Posterior cingulate gyrus (tissue), 11 donors: ENCODE measurements at regions of chr7 and their contacts with region 1.

Region 1: GRCh38 chr7:127107601-127108007 is 145.1 kb downstream of the GRM8 start:
- DNase-seq: peak in 2 of 10 donors; percentile 43 to 53

Region 2: DNA sequence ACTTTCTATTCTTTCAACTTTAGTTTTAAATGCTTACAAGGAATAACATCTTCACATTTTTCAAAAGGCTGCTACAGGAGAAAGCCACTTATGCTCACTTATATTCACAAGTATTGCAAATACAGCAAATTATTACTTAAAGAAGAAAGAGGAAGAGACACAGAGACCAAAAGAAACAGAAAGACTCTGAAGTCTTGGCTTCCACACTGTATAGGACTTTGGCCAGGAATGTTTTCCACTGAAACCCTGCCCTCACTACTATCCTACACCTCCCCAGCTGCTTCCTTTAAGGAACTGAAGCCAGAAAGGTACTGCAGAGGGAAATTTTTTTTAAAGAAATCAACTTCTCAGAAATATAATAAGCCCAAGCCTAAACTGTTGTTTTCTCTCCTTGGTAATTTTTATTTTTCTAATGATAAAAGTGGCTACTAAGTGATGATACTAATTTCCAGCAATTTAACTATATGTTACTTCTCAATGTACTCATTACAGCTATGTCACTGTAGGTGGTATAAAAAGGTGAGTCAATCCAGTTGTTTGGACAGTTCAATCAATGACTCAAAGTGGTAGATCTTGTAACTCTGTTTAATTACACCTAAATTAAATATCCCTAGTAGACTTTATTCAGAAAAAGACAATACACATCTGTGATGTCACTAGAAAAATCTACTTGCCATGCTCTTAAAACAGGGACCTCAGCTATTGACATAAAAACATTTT is 86.4 kb before region 1 on chr7:
- intact Hi-C with region 1: no loop called
- DNase-seq: no peak

Region 3: DNA sequence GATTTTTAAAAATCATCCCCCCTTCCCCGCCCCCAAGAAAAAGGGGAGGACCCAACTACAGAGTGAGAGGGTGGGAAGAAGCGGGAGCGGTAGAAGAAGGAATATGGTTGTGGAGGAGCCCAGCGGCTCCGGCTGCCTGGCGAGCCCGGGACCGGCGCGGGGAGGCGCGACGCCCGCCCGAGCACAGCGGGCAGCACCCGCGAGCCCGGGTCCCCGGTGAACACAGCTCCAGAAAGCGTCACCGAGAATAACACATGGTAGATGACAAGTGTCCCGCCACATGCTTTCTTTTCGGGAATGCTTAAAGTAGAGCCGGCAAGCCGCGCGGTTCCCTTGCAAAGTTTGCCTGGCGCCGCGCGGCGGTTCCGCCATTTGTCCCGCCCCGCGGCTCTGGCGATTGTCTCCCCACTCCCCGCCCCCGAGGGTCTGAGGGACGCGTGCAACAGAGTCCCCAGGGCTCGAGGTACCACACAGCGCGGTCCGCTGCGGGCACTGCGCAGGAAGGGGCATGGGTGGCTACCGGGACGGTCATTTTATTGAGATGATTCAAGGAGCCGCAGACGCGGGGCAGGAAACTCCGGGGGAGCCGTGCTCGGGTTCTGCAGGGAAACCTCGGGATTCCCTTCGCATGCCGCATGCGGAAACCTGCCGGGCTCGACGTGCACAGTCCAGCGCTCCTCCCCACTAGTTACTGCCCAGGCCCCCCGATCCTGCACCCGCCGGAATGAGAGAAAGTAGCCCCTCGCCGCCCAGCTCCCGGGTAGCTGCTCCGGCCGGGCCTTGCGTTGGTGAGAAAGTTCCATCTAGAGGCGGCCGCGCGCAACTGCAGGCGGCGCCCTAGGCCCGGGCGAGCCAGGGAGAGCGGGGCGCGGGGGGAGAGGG is 145.9 kb after region 1 on chr7:
- intact Hi-C with region 1: loop called (anchors 5 kb)
- DNase-seq: peak; percentile 60 to 96 (median 74)

Region 4: GRCh38 chr7:127651556-127652332 is 544.1 kb after region 1 on chr7 and contains the start of gene SND1:
- intact Hi-C with region 1: no loop called
- DNase-seq: peak; percentile 98 to 100 (median 99)